Pancreas (tissue), 10 donors: ENCODE measurements at regions of chr5 and their contacts with region 1.

Region 1: GRCh38 chr5:131277875-131278740 is 14.3 kb downstream of the CDC42SE2 start:
- DNase-seq: no peak
- ATAC-seq: peak in 1 of 4 donors; percentile 29
- H3K4me3 ChIP-seq: no peak overlapping the region
- H3K27ac ChIP-seq: no peak overlapping the region
- H3K4me1 ChIP-seq: peaks cover 11 to 38% (median 18%) of the 10 kb centered on the region in 3 donors
- H3K27me3 ChIP-seq: no peaks in the 10 kb centered on the region
- CTCF ChIP-seq: no peak

Region 2: GRCh38 chr5:130708754-130709153 is 569.4 kb before region 1 on chr5:
- intact Hi-C with region 1: no loop called
- DNase-seq: no peak
- ATAC-seq: no peak
- H3K4me3 ChIP-seq: no peak overlapping the region
- H3K27ac ChIP-seq: no peak overlapping the region
- H3K4me1 ChIP-seq: no peaks in the 10 kb centered on the region
- H3K27me3 ChIP-seq: no peaks in the 10 kb centered on the region
- CTCF ChIP-seq: no peak

Region 3: DNA sequence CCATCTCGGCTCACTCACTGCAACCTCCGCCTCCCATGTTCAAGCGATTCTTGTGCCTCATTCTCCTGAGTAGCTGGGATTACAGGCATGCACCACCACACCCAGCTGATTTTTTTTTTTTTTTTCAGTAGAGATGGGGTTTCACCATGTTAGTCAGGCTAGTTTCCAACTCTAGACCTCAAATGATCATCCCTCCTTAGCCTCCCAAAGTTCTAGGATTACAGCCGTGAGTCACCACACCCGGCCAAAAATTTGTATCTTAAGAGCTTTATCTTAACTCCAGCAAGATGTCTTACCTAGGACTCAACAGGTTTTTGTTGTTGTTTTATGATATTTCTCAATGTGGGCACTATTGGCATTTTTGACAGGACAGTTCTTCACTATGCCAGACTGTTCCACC is 79.5 kb before region 1 on chr5:
- intact Hi-C with region 1: no loop called
- DNase-seq: no peak
- ATAC-seq: no peak
- H3K4me3 ChIP-seq: no peak overlapping the region
- H3K27ac ChIP-seq: no peak overlapping the region
- H3K4me1 ChIP-seq: no peaks in the 10 kb centered on the region
- H3K27me3 ChIP-seq: no peaks in the 10 kb centered on the region
- CTCF ChIP-seq: no peak

Region 4: DNA sequence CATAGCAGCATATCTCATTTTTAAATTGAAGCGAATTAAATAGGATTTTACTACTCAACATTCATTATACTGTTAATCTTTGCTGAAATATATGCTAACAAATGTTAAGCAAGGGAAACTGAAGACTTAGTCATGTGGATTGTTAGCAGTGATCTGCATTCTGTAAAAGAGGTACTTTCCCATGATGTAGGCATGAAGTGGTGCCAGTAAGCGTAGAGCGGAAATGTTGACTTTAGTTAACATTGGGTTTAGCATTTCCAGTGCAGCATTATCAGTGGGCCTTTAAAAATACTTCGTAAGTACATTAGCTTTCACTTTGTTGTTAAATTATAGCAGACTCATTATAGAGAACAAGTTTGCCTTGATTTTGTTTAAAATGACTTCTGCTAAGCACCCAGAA is 116.0 kb after region 1 on chr5:
- intact Hi-C with region 1: loop called in 1 of 3 experiments (anchors 10 kb)
- DNase-seq: peak in 3 of 6 donors; percentile 33 to 62 (median 49)
- ATAC-seq: peak; percentile 95 to 99 (median 96)
- H3K4me3 ChIP-seq: no peak overlapping the region
- H3K27ac ChIP-seq: peak overlapping the region; percentile 11 to 85 (median 49)
- H3K4me1 ChIP-seq: peaks cover 0 to 32% (median 23%) of the 10 kb centered on the region in 3 donors
- H3K27me3 ChIP-seq: no peaks in the 10 kb centered on the region
- CTCF ChIP-seq: no peak